Dendritic cell treated with granulocyte-macrophage colony-stimulating factor and Interleukin-4, amounts not matched to agents 40 ng/mL and 50 ng/mL, for 4 days (primary cell): ENCODE measurements at regions of chr4 and their contacts with region 1.

Region 1: GRCh38 chr4:98260579-98261290 is 449 bp upstream of the RAP1GDS1 start:
- H3K4me3 Mint-ChIP-seq: peak overlapping the region; percentile 88
- H3K27ac Mint-ChIP-seq: peak overlapping the region; percentile 98
- H3K4me1 Mint-ChIP-seq: peaks cover 52% of the 10 kb centered on the region
- H3K27me3 Mint-ChIP-seq: no peaks in the 10 kb centered on the region

Region 2: DNA sequence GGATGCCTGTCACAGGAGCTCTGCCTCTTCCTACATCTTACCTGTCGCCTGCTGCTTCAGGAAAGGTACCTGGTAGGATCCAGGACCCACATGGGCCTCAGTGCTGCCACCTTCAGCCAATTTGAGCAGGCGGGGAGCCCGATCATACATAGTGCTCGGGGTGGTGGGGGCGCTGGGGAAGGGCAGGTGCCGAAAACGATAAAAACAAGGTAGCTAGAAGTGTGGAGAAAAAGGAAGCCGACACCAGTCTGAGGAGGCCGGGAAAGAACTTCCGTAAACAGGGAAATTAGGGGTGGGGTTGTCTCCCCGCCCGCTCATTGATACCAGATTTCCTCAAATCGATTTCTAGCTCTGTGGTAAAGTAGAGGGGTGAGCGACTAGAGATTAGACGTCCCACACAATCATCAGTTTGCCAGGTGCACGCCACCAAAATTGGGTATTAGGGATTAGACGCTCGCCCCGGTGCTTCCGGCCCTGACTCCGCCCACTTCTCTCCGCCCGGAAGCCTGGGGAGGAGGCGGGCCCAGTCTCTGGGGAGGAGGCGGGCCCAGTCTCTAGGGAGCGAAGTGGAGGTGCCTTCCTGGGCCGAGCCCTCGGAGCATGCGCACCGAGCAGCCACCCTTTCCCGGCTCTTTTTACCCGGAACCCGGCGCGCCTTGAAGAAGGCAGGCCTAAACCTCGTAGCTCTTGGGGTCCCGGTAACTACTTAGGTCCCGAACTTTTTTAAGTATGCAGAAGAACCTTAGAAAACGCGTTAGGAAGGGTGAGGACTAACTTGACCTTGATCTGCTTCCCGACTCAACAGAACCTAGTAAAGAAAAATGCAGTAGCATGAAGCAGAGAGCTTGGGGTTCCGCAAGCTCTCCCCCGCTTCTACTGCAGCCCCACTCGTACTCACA is 117.5 kb before region 1 on chr4 and contains the start of gene STPG2:
- intact Hi-C with region 1: loop called (anchors 1 kb)
- H3K4me3 Mint-ChIP-seq: peak within 1 kb of the TSS; percentile 78
- H3K27ac Mint-ChIP-seq: peak within 1 kb of the TSS; percentile 92
- H3K4me1 Mint-ChIP-seq: peaks cover 11% of the 10 kb centered on the region
- H3K27me3 Mint-ChIP-seq: peaks cover 5% of the 10 kb centered on the region

Region 3: GRCh38 chr4:98663226-98664006 is 402.7 kb after region 1 on chr4:
- intact Hi-C with region 1: loop called (anchors 10 kb)
- H3K4me3 Mint-ChIP-seq: peak overlapping the region; percentile 55
- H3K27ac Mint-ChIP-seq: peak overlapping the region; percentile 71
- H3K4me1 Mint-ChIP-seq: peaks cover 29% of the 10 kb centered on the region
- H3K27me3 Mint-ChIP-seq: peaks cover 29% of the 10 kb centered on the region

Region 4: GRCh38 chr4:98995183-98996055 is 734.7 kb after region 1 on chr4 and contains the start of gene METAP1:
- intact Hi-C with region 1: loop called (anchors 5 kb)
- H3K4me3 Mint-ChIP-seq: peak within 1 kb of the TSS; percentile 86
- H3K27ac Mint-ChIP-seq: peak within 1 kb of the TSS; percentile 94
- H3K4me1 Mint-ChIP-seq: peaks cover 27% of the 10 kb centered on the region
- H3K27me3 Mint-ChIP-seq: peaks cover 3% of the 10 kb centered on the region

Region 5: DNA sequence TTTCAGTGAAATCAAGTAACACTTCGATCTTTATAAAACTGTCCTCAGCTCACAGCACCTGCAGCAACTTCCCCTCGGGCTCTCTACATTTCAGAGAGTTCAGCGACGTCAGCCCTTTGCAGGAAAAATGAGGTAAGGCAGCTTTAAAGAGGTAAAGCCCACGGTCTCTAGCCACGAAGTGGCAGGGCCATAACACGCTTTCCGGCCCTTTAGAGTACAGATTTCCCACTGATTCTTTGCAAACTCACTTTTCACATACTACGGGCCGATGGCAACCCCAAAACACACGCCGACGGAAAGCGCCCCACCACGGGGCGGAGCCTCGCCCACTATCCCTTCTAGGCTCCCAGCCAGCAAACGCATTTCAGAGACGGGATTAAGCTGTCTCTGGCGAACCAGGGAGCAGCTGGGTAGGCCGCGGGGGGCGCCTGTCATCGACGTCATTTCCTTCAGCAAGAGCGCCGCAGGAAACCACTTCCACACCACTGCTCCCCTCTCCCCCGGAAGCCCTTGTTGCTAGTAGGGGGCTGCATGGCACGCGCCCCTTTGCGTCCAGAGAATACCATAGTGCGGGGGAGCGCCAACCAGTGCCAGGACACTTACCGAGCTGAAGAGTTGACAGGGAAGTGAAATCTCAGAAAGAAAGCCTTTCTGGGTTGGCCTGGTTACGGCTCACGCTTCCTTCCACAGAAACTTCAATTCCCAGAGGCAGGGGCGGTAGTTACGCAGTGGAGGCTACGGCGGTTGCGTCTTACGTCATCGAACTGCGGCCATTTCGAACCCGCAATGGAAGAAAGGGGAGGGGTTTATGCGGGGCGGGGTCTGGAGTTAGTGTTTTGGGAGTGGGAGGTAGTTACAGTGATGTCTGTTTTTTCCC is 1302.8 kb after region 1 on chr4 and contains the start of gene TRMT10A:
- intact Hi-C with region 1: loop called (anchors 5 kb)
- H3K4me3 Mint-ChIP-seq: peak within 1 kb of the TSS; percentile 87
- H3K27ac Mint-ChIP-seq: peak within 1 kb of the TSS; percentile 95
- H3K4me1 Mint-ChIP-seq: no peaks in the 10 kb centered on the region
- H3K27me3 Mint-ChIP-seq: peaks cover 12% of the 10 kb centered on the region